Calu3 (cell line): ENCODE measurements at regions of chr19 and their contacts with region 1.

Region 1: DNA sequence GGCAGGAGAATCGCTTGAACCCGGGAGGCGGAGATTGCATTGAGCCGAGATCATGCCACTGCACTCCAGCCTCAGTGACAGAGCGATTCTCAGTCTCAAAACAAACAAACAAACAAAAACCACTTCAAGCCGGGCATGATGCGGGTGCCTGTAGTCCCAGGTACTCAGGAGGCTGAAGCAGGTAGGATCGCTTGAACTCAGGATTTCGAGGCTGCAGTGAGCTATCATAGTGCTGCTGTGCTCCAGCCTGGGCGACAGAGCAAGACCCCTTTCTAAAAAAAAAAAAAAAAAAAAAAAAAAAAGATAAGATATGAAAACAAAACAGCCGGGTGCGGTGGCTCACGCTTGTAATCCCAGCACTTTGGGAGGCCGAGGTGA is 12.9 kb downstream of the PPP1R14A start:
- DNase-seq: no peak
- H3K4me3 Mint-ChIP-seq: peak overlapping the region; percentile 59
- H3K27ac Mint-ChIP-seq: peak overlapping the region; percentile 24
- H3K4me1 Mint-ChIP-seq: peaks cover 17% of the 10 kb centered on the region
- H3K27me3 Mint-ChIP-seq: peaks cover 22% of the 10 kb centered on the region
- CTCF ChIP-seq: no peak

Region 2: GRCh38 chr19:38304866-38305429 is 61.7 kb after region 1 on chr19:
- CTCF ChIA-PET with region 1: interaction called, 18 read pairs
- intact Hi-C with region 1: no loop called
- DNase-seq: peak; percentile 97
- H3K4me3 Mint-ChIP-seq: peak overlapping the region; percentile 96
- H3K27ac Mint-ChIP-seq: peak overlapping the region; percentile 96
- H3K4me1 Mint-ChIP-seq: peaks cover 46% of the 10 kb centered on the region
- H3K27me3 Mint-ChIP-seq: no peaks in the 10 kb centered on the region
- CTCF ChIP-seq: no peak

Region 3: DNA sequence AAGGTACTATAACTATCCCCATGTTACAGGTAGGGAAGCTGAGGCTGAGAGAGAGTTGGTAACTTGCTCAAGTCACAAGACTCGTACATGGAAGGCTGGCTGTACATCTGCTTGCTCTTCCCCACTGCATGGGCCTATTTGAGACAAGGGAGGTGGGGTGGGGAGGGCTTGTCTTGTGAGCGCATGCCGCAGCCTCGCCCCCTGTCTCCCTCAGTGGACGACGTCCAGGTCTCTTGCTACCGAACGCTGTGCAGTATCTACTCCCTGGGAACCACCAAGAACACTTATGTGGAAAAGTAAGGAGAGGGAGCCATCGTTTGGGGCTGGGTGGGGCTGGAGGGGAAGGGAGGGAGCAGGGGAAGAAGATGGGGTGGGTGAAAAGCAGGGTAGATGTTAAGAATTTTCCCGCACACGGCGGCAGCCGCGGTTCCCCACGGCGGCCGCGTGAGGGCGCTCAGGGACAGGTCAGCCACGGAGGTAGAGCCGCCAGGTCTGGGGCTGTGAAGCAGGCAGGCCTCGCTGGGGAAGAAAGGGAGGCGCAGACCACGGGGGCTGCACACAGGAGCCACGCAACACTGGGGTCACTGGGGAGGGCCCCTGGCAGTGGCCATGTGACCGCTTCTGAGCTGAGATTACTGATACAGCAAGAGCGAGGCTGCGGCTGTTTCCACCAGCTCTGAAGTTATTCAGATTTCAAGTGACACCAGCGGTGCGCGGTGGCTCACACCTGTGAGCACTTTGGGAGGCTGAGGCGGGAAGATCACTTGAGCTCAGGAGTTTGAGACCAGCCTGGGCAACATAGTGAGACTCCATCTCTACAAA is 271.8 kb after region 1 on chr19:
- CTCF ChIA-PET with region 1: no interaction called
- intact Hi-C with region 1: no loop called
- DNase-seq: peak; percentile 88
- H3K4me3 Mint-ChIP-seq: peak overlapping the region; percentile 34
- H3K27ac Mint-ChIP-seq: peak overlapping the region; percentile 18
- H3K4me1 Mint-ChIP-seq: no peaks in the 10 kb centered on the region
- H3K27me3 Mint-ChIP-seq: peaks cover 33% of the 10 kb centered on the region
- CTCF ChIP-seq: peak; percentile 95